Endothelial cell of umbilical vein (primary cell): ENCODE measurements at regions of chr2 and their contacts with region 1.

Region 1: GRCh38 chr2:45643543-45644542 is 7.6 kb upstream of the PRKCE start:
- DNase-seq: peak; percentile 51
- H3K4me3 ChIP-seq: peak overlapping the region; percentile 52 to 63 (median 59)
- H3K27ac ChIP-seq: peak overlapping the region; percentile 13
- H3K4me1 ChIP-seq: peaks cover 3% of the 10 kb centered on the region
- H3K27me3 ChIP-seq: no peaks in the 10 kb centered on the region
- CTCF ChIP-seq: peak; percentile 87 to 95
- POLR2A ChIP-seq: no peak

Region 2: GRCh38 chr2:45585267-45585861 is 58.5 kb before region 1 on chr2:
- CTCF ChIA-PET with region 1: interaction called, 6 read pairs
- POLR2A ChIA-PET with region 1: no interaction called
- dilution Hi-C with region 1: no loop called
- intact Hi-C with region 1: loop called (anchors 1 kb)
- DNase-seq: peak; percentile 74
- H3K4me3 ChIP-seq: no peak overlapping the region
- H3K27ac ChIP-seq: no peak overlapping the region
- H3K4me1 ChIP-seq: peaks cover 3% of the 10 kb centered on the region
- H3K27me3 ChIP-seq: no peaks in the 10 kb centered on the region
- CTCF ChIP-seq: peak; percentile 58 to 59
- POLR2A ChIP-seq: no peak

Region 3: DNA sequence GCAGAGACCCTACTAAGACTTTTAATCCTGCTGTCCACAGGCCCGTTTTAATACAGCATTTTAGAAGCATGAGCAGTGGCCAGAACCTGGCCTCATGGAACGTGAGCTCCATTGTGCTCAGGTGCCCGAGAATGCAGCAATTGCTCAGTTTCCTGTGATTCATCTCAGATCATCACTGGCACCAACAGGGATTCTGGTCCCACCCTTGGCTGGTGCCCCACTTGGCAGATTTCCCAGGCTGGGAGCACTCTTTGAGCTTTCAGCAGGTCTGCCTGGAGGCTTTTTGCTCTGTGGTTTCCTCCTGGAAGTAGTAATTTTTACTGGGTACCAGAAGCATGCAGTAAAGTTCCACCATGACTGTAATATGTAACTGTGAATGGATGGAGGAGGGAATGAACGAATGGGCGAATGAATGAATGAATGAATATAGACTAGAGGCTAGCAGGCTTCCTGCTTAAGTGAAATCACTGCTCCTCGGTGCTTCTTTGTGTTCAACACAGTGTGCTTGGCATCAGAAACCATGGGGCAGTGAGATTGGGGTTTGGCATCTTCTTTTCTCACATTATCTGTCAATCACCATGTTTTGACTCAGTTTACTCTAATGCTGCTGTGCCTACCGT is 320.5 kb after region 1 on chr2:
- CTCF ChIA-PET with region 1: no interaction called
- POLR2A ChIA-PET with region 1: no interaction called
- dilution Hi-C with region 1: no loop called
- intact Hi-C with region 1: loop called (anchors 1 kb)
- DNase-seq: peak; percentile 95
- H3K4me3 ChIP-seq: peak overlapping the region in 1 of 3 experiments; percentile 3
- H3K27ac ChIP-seq: peak overlapping the region; percentile 80
- H3K4me1 ChIP-seq: peaks cover 37% of the 10 kb centered on the region
- H3K27me3 ChIP-seq: no peaks in the 10 kb centered on the region
- CTCF ChIP-seq: no peak
- POLR2A ChIP-seq: no peak

Region 4: DNA sequence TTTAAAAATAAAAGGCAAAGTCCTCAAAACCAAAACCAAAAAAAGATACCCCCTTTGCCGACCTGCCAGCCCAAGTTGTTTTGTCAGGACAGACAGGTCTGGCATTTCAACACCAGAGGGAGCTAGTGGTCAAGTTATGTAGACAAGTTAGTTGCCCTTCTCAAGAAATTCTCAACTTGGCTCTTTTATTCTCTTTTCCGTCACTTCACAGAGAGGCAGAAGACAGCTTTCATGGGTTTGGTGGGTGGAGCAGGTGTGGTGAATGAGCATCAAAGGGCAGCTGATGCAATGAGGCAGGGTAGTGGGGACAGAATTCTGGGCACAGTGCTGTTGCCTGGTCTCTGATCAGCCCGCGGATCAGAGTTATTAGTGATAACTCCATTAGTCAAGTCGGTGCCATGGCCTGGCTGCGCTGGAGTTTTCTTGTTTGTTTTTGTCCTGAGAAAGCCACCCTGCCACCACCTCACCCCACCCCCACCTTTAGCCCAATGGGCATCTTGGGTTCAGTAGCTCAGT is 349.7 kb after region 1 on chr2:
- CTCF ChIA-PET with region 1: interaction called, 9 read pairs
- POLR2A ChIA-PET with region 1: no interaction called
- dilution Hi-C with region 1: no loop called
- intact Hi-C with region 1: loop called (anchors 1 kb)
- DNase-seq: peak; percentile 75
- H3K4me3 ChIP-seq: no peak overlapping the region
- H3K27ac ChIP-seq: no peak overlapping the region
- H3K4me1 ChIP-seq: no peaks in the 10 kb centered on the region
- H3K27me3 ChIP-seq: no peaks in the 10 kb centered on the region
- CTCF ChIP-seq: peak; percentile 72 to 74
- POLR2A ChIP-seq: no peak

Region 5: GRCh38 chr2:46461011-46461674 is 817.3 kb after region 1 on chr2:
- CTCF ChIA-PET with region 1: no interaction called
- POLR2A ChIA-PET with region 1: no interaction called
- dilution Hi-C with region 1: no loop called
- intact Hi-C with region 1: loop called (anchors 1 kb)
- DNase-seq: peak; percentile 72
- H3K4me3 ChIP-seq: no peak overlapping the region
- H3K27ac ChIP-seq: no peak overlapping the region
- H3K4me1 ChIP-seq: no peaks in the 10 kb centered on the region
- H3K27me3 ChIP-seq: no peaks in the 10 kb centered on the region
- CTCF ChIP-seq: peak; percentile 93
- POLR2A ChIP-seq: no peak

Region 6: GRCh38 chr2:46569061-46569560 is 925.3 kb after region 1 on chr2:
- CTCF ChIA-PET with region 1: no interaction called
- POLR2A ChIA-PET with region 1: no interaction called
- dilution Hi-C with region 1: no loop called
- intact Hi-C with region 1: no loop called
- DNase-seq: no peak
- H3K4me3 ChIP-seq: no peak overlapping the region
- H3K27ac ChIP-seq: no peak overlapping the region
- H3K4me1 ChIP-seq: no peaks in the 10 kb centered on the region
- H3K27me3 ChIP-seq: no peaks in the 10 kb centered on the region
- CTCF ChIP-seq: no peak
- POLR2A ChIP-seq: no peak